ENCODE measurements at regions of chr1 and their contacts with region 1.

Region 1: DNA sequence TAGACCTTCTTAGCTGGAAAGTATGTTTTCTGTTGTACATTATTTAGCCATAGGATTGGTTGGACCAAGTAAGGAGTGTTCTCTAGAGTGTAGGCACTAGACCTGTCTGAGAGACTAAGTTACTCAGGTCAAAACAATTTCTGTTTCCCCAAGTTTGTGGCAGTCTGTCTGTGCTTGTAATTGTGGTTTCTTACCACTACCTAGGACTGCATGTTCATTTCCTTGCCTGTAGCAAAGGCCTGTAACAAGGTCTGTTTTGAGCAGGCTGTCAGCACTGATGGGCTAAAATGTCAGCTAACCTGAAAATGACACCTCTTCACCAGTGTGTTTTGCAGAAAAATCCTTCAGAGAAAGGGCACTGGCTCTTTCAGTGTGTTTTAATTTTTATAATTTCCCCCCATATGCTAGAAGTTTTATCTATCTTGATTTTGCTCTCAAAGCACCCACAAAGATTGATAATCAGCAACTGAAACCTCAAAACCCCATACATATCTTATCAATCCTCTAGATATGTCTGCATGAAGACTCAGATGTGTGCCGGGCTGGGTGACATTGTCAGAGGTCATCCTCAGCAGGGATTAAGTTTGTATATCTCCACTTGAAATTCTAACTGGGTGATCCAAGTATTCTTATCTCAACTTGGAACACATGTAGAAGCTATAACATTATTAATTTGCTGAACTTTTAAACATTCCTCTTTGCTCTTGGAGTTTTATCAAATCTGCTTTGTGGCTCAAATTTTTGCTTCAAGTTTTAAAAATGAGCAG is 50.7 kb upstream of the ST6GALNAC3 start:
- DNase-seq: peak; percentile 35
- H3K4me3 Mint-ChIP-seq: no peak overlapping the region
- H3K27ac Mint-ChIP-seq: peak overlapping the region; percentile 48
- H3K4me1 Mint-ChIP-seq: peaks cover 18% of the 10 kb centered on the region
- H3K27me3 Mint-ChIP-seq: peaks cover 53% of the 10 kb centered on the region

Region 2: DNA sequence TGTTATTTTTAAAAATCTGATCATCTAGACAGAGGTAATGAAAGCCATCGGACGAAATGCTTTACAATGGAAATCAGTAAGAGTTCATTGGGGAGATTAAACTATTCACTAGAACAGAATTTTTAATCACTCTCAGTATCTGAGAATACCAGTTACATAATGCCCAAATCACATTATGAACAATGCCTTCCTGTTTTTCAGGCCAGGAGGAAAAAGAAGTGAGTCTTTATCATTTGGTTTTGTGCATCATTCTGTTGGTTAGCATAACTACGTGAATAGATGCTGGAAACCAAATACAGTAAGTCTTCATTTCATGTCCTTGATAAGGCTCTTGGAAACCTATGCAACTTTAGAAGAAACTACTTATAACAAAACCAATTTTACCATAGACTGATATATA is 73.7 kb before region 1 on chr1:
- intact Hi-C with region 1: no loop called
- DNase-seq: no peak
- H3K4me3 Mint-ChIP-seq: no peak overlapping the region
- H3K27ac Mint-ChIP-seq: no peak overlapping the region
- H3K4me1 Mint-ChIP-seq: no peaks in the 10 kb centered on the region
- H3K27me3 Mint-ChIP-seq: peaks cover 2% of the 10 kb centered on the region

Region 3: GRCh38 chr1:76059451-76059850 is 35.6 kb after region 1 on chr1:
- intact Hi-C with region 1: no loop called
- DNase-seq: no peak
- H3K4me3 Mint-ChIP-seq: no peak overlapping the region
- H3K27ac Mint-ChIP-seq: no peak overlapping the region
- H3K4me1 Mint-ChIP-seq: peaks cover 1% of the 10 kb centered on the region
- H3K27me3 Mint-ChIP-seq: peaks cover 11% of the 10 kb centered on the region

Region 4: DNA sequence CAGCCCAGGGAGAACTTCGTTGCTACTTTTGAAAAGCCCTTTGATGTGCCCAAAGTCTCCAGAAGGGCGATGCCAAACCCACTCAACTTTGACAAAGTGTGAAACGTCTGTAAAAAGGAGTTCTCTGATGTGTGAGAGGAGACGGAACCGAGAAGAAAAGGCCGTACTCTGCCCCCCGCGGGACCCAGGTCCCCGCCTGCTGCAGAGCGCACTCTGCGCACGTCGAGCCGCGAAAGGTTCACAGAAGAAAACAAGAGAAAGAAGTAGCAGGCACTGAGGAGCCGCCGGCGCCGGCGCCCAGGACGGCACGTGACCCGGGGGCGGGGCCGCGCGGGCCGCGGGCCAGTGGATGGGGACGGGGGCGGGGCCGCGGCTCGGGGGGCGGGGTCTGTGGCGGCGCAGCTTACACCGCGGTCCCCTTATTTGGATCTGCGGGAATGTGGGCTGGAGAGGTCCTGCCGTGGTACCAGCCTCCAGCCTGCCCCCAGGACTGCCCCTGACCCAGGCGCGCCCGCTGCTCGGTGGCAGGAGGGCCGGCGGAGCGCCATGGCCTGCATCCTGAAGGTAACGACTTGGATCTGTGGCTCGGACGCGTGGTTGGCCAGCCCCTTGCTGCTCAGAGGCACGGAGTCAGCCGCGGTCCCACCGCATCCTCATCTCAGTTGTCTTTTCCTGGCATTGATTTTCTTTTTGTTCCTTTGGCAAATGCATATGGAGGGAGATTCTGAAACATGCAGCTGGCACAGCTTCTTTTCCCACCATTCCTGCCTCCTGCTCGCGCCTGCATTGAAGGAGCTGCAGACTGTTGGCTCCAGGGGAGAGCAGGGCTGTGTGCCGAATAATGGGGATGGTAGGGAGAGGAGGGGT is 50.7 kb after region 1 on chr1 and contains the start of gene ST6GALNAC3:
- intact Hi-C with region 1: loop called (anchors 2 kb)
- DNase-seq: peak; percentile 68
- H3K4me3 Mint-ChIP-seq: peak within 1 kb of the TSS; percentile 81
- H3K27ac Mint-ChIP-seq: no peak within 1 kb of the TSS
- H3K4me1 Mint-ChIP-seq: peaks cover 14% of the 10 kb centered on the region
- H3K27me3 Mint-ChIP-seq: peaks cover 44% of the 10 kb centered on the region
- total RNA-seq, gene ST6GALNAC3: 0.53 TPM in 1 of 2 replicates, not detected in the other

Region 5: DNA sequence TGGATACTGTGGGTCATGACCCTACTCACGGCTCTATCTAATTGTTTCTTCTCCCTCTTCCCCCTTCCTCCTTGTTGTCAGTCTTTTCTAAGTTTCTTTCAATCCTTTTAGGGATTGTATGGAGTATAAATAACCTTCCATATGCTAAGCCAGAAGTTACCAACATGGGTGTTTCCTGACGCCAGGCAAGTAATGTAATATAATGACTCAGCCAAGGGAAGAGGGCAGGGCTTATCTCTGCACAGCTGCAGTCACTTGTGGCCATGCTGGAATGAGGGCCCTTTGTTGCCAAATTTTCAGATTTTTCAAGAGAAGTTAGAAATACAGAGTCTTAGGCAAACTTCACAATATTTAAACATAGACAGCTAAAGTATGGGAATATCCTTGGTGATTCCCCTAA is 245.3 kb after region 1 on chr1:
- intact Hi-C with region 1: loop called (anchors 10 kb)
- DNase-seq: no peak
- H3K4me3 Mint-ChIP-seq: peak overlapping the region; percentile 53
- H3K27ac Mint-ChIP-seq: no peak overlapping the region
- H3K4me1 Mint-ChIP-seq: peaks cover 55% of the 10 kb centered on the region
- H3K27me3 Mint-ChIP-seq: peaks cover 8% of the 10 kb centered on the region